Activated T-helper 1 cell treated with anti-CD3 and anti-CD28 coated beads, Interleukin-12 subunit alpha, Interleukin-12 subunit beta, Interleukin-2, Interleukin-4 antibody, amounts not matched to agents 30 ng/mL and 10 ng/mL and 1 ng/mL, durations not matched to agents 14 hours and 24 hours and 36 hours (primary cell): ENCODE measurements at regions of chr5 and their contacts with region 1.

Region 1: DNA sequence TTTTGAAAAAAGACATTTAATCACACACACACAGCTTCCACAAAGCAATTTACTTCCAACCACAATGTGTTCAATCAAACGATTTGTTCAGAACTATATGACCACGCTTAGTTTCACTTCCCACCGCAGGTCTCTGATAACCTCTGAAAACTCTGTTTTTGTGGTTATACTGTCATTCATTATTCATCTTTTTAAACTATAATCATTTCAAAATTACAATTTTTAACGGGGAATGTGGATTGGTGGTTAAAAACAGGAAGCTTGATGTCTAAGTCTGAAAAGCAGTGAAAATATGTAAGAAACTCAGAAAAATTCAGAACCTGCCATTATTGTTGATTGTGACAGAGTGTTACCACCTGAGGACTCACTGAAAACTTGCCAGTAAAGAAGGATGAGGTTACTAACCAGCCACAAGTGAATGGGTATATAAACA is 12.7 kb upstream of the TMEM174 start:
- DNase-seq: peak; percentile 38
- H3K4me3 Mint-ChIP-seq: no peak overlapping the region
- H3K27ac Mint-ChIP-seq: peak overlapping the region; percentile 64
- H3K4me1 Mint-ChIP-seq: peaks cover 24% of the 10 kb centered on the region
- H3K27me3 Mint-ChIP-seq: peaks cover 76% of the 10 kb centered on the region

Region 2: GRCh38 chr5:72138943-72139521 is 1021.2 kb before region 1 on chr5:
- intact Hi-C with region 1: loop called (anchors 2 kb)
- DNase-seq: no peak
- H3K4me3 Mint-ChIP-seq: no peak overlapping the region
- H3K27ac Mint-ChIP-seq: no peak overlapping the region
- H3K4me1 Mint-ChIP-seq: peaks cover 12% of the 10 kb centered on the region
- H3K27me3 Mint-ChIP-seq: peaks cover 35% of the 10 kb centered on the region

Region 3: GRCh38 chr5:73215891-73216610 is 55.8 kb after region 1 on chr5:
- intact Hi-C with region 1: loop called (anchors 1 kb)
- DNase-seq: peak; percentile 41
- H3K4me3 Mint-ChIP-seq: no peak overlapping the region
- H3K27ac Mint-ChIP-seq: no peak overlapping the region
- H3K4me1 Mint-ChIP-seq: peaks cover 6% of the 10 kb centered on the region
- H3K27me3 Mint-ChIP-seq: peaks cover 65% of the 10 kb centered on the region

Region 4: GRCh38 chr5:73437101-73437776 is 277.0 kb after region 1 on chr5:
- intact Hi-C with region 1: no loop called
- DNase-seq: no peak
- H3K4me3 Mint-ChIP-seq: no peak overlapping the region
- H3K27ac Mint-ChIP-seq: no peak overlapping the region
- H3K4me1 Mint-ChIP-seq: peaks cover 6% of the 10 kb centered on the region
- H3K27me3 Mint-ChIP-seq: peaks cover 83% of the 10 kb centered on the region

Region 5: DNA sequence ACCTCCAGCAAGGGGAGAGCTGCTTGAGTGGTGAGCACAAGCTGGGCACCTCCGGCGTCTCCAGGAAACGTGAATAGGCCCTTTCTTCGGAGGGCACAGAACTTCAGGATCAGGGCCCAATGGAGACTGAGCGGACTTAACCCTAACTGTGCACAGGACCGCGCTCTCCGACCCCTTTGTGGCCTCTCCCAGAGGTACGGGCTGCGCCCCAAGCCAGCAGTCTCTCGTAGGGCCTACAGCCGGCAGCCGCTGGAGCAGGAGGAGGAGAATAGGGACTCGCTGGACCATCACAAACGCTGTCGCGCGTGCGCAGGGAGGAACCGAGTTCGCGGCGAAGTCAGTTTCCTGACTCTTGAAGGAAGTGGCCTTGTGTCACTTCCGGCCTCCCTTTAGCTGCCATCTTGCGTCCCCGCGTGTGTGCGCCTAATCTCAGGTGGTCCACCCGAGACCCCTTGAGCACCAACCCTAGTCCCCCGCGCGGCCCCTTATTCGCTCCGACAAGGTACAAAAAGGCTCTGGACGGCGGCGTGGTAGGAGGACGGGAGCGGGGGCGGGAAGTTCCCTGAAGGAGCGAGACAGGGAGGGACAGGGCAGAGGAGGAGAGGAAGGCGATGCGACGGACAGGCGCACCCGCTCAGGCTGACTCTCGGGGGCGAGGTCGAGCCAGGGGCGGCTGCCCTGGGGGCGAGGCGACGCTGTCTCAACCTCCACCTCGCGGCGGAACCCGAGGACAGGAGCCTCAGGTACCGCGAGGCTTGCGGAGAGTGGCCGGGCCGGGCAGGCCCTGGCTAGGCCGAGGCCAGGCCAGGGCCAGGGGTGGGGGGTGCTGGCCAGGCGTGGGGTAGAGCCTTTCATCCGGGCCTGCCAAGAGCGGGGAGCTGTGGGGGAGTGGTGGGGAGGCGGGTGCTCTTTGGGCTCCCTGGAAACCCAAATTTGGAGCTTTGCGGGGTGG is 338.1 kb after region 1 on chr5 and contains the start of gene BTF3:
- intact Hi-C with region 1: loop called (anchors 2 kb)
- DNase-seq: peak; percentile 92
- H3K4me3 Mint-ChIP-seq: peak within 1 kb of the TSS; percentile 99
- H3K27ac Mint-ChIP-seq: peak within 1 kb of the TSS; percentile 99
- H3K4me1 Mint-ChIP-seq: peaks cover 39% of the 10 kb centered on the region
- H3K27me3 Mint-ChIP-seq: peaks cover 12% of the 10 kb centered on the region
- total RNA-seq, gene BTF3: 913 and 929 TPM in 2 replicates